Tibial artery (tissue), 4 donors: ENCODE measurements at regions of chr5 and their contacts with region 1.

Region 1: GRCh38 chr5:138542956-138543729 is at the start of gene ETF1:
- DNase-seq: peak; percentile 100
- H3K4me3 ChIP-seq: peak within 1 kb of the TSS; percentile 73 to 77
- H3K27ac ChIP-seq: peak within 1 kb of the TSS; percentile 97 to 99
- H3K4me1 ChIP-seq: peaks cover 0 to 75% (median 52%) of the 10 kb centered on the region in 4 donors
- H3K27me3 ChIP-seq: no peaks in the 10 kb centered on the region
- CTCF ChIP-seq: peak in 1 of 2 experiments; percentile 18

Region 2: DNA sequence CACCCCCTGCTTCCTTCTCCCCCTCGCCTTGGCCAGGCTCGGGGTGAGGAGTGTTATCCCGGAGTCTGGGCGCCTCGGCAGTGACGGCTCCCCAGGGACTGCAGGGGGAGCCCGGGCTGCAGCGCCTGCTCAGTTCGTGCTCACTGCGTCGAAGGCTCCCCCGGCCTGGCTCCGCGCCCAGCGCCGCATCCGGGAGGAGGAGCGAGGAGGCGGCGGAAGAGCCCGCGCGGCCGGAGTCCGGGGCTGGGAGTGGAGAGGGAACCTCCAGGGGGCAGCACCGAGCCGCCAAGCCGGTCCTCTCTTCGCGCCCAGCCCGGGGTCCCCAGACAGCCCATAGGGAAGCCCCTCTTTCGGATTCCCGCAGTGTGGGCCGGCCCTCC is 79.1 kb before region 1 on chr5:
- intact Hi-C with region 1: loop called (anchors 2 kb)
- DNase-seq: peak; percentile 92 to 97
- H3K4me3 ChIP-seq: peak overlapping the region; percentile 60 to 85
- H3K27ac ChIP-seq: peak overlapping the region; percentile 93 to 95
- H3K4me1 ChIP-seq: peaks cover 0 to 44% (median 31%) of the 10 kb centered on the region in 4 donors
- H3K27me3 ChIP-seq: no peaks in the 10 kb centered on the region
- CTCF ChIP-seq: peak; percentile 93 to 94